ENCODE measurements at regions of chr1 and their contacts with region 1.

Region 1: DNA sequence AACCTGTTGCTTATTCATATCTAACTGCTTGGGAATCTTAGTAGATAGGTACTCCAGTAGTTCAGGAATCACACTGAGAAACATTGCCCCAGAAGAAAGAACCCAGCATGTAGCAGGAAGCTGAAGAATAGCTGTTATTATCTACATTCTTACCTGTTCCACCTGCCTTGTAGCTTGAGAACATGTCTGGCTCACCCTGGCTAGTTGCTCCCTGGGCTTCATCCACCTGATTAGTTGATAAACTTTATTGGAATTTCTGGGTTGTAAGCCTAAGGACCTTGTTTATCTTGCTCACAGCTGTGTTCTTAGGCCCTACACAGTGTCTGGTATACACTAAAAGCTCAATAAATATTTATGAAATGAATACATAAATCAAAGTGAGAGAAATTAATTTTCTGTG is 106.3 kb upstream of the DMRTA2 start:
- DNase-seq: no peak
- ATAC-seq: no peak
- H3K4me3 ChIP-seq: no peak overlapping the region
- H3K27ac ChIP-seq: no peak overlapping the region
- H3K4me1 ChIP-seq: peaks cover 2% of the 10 kb centered on the region; the same call in 1 of the 2 replicates
- H3K27me3 ChIP-seq: no peaks in the 10 kb centered on the region
- CTCF ChIP-seq: no peak
- POLR2A ChIP-seq: no peak
- RAD21 ChIP-seq: no peak

Region 2: DNA sequence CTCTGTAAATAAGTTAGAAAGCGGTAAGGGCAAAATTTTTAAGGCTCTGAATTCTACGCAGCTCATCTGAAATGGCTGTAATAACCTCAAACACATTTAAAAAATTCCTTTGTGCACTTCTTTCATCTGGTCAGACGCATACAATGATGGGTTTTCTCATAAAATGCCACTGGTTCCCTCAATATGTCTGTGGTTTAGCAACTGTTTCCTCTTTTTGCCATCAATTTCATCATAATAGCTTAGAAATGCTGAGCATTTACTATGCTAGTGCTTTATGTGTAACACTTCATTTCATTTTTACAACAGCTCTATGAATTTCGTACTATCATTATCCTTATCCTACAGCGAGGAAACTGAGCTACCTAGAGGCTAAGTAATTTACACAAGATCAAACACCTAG is 71.0 kb before region 1 on chr1:
- CTCF ChIA-PET with region 1: no interaction called
- POLR2A ChIA-PET with region 1: no interaction called
- dilution Hi-C with region 1: no loop called
- in situ Hi-C with region 1: no loop called
- intact Hi-C with region 1: loop called (anchors 2 kb)
- DNase-seq: no peak
- ATAC-seq: no peak
- H3K4me3 ChIP-seq: no peak overlapping the region
- H3K27ac ChIP-seq: no peak overlapping the region
- H3K4me1 ChIP-seq: no peaks in the 10 kb centered on the region
- H3K27me3 ChIP-seq: no peaks in the 10 kb centered on the region
- CTCF ChIP-seq: no peak
- POLR2A ChIP-seq: no peak
- RAD21 ChIP-seq: no peak

Region 3: DNA sequence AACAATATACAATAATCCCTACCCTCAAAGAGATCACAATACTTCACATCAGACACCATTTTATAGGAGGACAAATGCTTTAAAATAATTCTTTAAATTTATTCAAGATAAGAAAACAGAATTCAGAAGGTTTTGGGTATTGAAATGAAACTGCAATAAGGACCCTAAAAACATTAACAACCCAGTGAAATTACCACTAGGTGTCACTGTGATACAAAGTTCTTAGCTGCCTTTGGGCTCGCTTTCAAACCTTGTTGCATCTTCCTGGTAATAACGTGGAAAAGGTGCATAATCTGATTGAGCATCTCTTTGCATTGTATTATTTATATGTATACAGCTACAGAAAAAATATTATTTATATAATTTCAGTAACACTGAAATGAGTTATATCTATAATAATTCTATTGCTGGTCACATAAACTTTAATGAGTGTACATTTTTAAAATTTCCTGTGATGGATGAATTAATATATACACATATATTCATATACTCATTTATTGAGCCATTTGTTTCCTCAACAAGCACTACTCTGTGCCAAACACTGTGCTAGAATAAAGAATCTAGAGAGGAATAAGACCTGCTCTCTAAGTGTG is 245.3 kb after region 1 on chr1:
- CTCF ChIA-PET with region 1: no interaction called
- POLR2A ChIA-PET with region 1: no interaction called
- dilution Hi-C with region 1: no loop called
- in situ Hi-C with region 1: no loop called
- intact Hi-C with region 1: no loop called
- DNase-seq: peak; percentile 74
- ATAC-seq: peak; percentile 60
- H3K4me3 ChIP-seq: no peak overlapping the region
- H3K27ac ChIP-seq: no peak overlapping the region
- H3K4me1 ChIP-seq: no peaks in the 10 kb centered on the region
- H3K27me3 ChIP-seq: no peaks in the 10 kb centered on the region
- CTCF ChIP-seq: peak; percentile 78
- POLR2A ChIP-seq: no peak
- RAD21 ChIP-seq: peak; percentile 83